Posterior cingulate gyrus (tissue), 11 donors: ENCODE measurements at regions of chr4 and their contacts with region 1.

Region 1: DNA sequence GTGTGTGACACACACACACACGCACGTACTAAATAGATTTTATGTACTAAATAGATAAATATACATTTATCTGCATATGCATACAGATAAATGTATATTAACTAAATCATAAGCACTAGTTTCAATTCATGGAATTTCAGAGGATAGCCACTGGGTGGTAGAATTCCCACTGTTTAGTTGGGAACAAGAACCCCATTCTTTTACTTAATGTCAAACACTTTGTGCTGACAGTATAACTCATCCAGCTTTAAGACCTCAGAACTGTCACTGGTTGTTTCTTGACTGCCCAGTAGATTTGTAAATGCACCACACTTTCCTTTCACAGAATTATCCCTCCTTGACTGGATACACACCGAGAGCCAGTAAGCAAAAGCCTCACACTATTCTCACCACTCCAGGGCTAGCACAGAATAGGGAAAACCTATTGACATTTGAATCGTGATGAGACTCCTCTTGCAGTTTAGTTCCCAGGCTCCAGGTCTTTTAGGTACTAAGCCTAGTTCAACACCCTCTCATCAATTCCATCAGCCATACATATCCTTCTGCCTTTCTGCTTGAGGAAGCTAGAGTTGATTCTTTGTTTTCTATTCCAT is 32.4 kb downstream of the PPARGC1A start:
- DNase-seq: no peak

Region 2: GRCh38 chr4:24419181-24420034 is 561.9 kb after region 1 on chr4:
- intact Hi-C with region 1: loop called (anchors 1 kb)
- DNase-seq: peak in 8 of 10 donors; percentile 43 to 92 (median 70)